WTC11 (cell line): ENCODE measurements at regions of chr12 and their contacts with region 1.

Region 1: DNA sequence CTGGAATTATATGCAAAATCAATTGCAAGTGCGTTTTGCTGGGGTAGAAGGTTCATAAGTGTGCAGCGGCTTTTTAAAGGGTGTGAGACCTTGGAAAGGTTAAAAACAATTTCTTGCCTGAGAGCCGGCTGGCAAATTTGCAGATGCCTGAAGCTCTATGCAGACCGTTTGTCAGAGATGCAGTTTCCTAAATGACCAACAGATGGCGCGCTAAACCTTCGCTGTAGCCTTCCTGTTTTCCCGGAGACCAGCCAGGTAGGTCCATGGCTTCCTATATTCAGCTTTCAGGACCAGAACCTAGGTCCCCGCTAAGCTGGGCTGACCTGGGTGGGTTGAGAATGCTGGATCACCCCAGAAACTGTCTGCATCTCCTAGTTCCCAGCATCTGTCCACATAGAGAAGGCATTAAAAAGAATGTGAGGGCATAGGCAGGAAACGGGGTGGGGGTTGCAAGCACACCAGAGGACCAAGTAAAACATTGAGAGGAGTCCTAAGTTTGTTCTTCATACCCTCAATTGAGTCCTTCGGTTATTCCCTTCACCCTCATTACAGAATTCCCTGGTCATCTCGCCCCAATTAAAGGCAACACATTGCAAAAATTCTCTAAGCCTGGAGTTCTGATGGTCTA is 5.7 kb upstream of the NOS1 start:
- DNase-seq: peak; percentile 91
- ATAC-seq: peak; percentile 86
- H3K4me3 Mint-ChIP-seq: no peak overlapping the region
- H3K27ac Mint-ChIP-seq: no peak overlapping the region
- H3K4me1 Mint-ChIP-seq: peaks cover 10% of the 10 kb centered on the region
- H3K27me3 Mint-ChIP-seq: peaks cover 34% of the 10 kb centered on the region
- CTCF ChIP-seq: peak; percentile 96

Region 2: GRCh38 chr12:117228239-117228638 is 138.9 kb before region 1 on chr12:
- CTCF ChIA-PET with region 1: interaction called, 15 read pairs
- POLR2A ChIA-PET with region 1: no interaction called
- DNase-seq: no peak
- ATAC-seq: no peak
- H3K4me3 Mint-ChIP-seq: no peak overlapping the region
- H3K27ac Mint-ChIP-seq: no peak overlapping the region
- H3K4me1 Mint-ChIP-seq: 0 out of 2 replicates have a peak, but pooled peaks cover 3% of the 10 kb centered on the region
- H3K27me3 Mint-ChIP-seq: no peaks in the 10 kb centered on the region; the same call in 1 of the 2 replicates
- CTCF ChIP-seq: no peak

Region 3: DNA sequence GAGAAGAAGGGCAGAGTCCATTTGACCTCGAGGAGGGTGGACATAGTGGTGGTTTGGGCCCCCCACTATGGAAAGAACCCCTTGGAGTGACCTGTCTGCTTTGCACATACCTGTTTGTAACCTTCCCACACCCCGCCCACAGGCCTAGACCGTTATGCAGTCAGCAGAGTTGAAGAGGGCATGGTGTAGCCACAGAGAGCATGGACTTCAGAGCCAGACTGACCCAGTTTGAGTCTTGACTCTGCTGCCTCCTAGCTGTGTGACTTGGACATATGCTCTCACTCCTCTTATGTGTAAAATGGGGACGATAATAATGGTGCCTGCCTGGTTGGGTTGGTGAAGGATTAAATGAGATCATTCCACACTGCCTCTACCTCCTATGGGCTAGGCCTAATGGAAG is 35.2 kb after region 1 on chr12:
- CTCF ChIA-PET with region 1: interaction called, 24 read pairs
- POLR2A ChIA-PET with region 1: no interaction called
- DNase-seq: peak; percentile 53
- ATAC-seq: peak; percentile 96
- H3K4me3 Mint-ChIP-seq: no peak overlapping the region
- H3K27ac Mint-ChIP-seq: no peak overlapping the region
- H3K4me1 Mint-ChIP-seq: peaks cover 2% of the 10 kb centered on the region
- H3K27me3 Mint-ChIP-seq: no peaks in the 10 kb centered on the region; the same call in 1 of the 2 replicates
- CTCF ChIP-seq: no peak

Region 4: GRCh38 chr12:117494833-117495655 is 127.9 kb after region 1 on chr12:
- CTCF ChIA-PET with region 1: interaction called, 14 read pairs
- POLR2A ChIA-PET with region 1: no interaction called
- DNase-seq: no peak
- ATAC-seq: no peak
- H3K4me3 Mint-ChIP-seq: no peak overlapping the region
- H3K27ac Mint-ChIP-seq: peak overlapping the region; percentile 29; the same call in 1 of the 2 replicates
- H3K4me1 Mint-ChIP-seq: peaks cover 23% of the 10 kb centered on the region
- H3K27me3 Mint-ChIP-seq: no peaks in the 10 kb centered on the region
- CTCF ChIP-seq: no peak

Region 5: DNA sequence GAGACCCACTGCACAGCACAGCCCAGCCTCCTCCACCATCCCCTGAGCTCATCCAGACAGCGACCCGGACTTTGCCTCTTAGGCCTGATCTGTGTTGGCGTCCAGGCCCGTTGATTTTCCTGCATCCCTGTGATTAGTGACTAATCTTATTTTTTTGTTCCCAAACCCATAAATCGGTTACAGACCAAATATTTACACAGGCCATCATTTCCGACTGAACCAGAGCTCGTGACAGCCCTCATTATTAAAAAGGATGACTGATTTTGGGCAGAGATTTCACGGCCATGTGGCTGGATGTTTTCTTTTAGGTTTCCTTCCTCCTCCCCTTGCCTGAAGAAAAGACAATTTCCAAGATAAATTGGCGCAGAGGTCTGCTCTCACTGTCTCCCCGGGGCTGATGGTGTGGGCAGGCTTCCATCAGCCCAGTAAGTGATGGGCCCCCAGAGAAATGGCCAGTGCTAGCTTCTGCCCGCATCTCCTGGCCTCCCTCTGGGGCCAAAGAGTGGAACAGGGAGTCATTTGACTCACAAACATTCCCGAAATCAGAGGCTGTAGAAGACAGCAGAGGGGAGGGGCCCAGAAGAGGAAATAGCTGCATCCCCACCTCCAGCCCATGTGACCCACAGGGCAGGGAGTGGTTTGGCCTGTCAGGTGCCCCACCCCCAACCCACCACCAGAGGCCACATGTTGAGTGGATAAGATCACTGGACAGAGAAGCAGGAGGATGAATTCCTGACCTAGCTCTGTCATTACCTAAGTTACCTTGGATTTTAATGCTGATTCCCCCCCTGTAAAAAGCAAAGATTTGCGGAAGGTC is 318.2 kb after region 1 on chr12:
- CTCF ChIA-PET with region 1: interaction called, 10 read pairs
- POLR2A ChIA-PET with region 1: no interaction called
- DNase-seq: peak; percentile 85
- ATAC-seq: peak; percentile 100
- H3K4me3 Mint-ChIP-seq: peak overlapping the region; percentile 43
- H3K27ac Mint-ChIP-seq: peak overlapping the region; percentile 98
- H3K4me1 Mint-ChIP-seq: peaks cover 20% of the 10 kb centered on the region
- H3K27me3 Mint-ChIP-seq: no peaks in the 10 kb centered on the region
- CTCF ChIP-seq: no peak

Region 6: DNA sequence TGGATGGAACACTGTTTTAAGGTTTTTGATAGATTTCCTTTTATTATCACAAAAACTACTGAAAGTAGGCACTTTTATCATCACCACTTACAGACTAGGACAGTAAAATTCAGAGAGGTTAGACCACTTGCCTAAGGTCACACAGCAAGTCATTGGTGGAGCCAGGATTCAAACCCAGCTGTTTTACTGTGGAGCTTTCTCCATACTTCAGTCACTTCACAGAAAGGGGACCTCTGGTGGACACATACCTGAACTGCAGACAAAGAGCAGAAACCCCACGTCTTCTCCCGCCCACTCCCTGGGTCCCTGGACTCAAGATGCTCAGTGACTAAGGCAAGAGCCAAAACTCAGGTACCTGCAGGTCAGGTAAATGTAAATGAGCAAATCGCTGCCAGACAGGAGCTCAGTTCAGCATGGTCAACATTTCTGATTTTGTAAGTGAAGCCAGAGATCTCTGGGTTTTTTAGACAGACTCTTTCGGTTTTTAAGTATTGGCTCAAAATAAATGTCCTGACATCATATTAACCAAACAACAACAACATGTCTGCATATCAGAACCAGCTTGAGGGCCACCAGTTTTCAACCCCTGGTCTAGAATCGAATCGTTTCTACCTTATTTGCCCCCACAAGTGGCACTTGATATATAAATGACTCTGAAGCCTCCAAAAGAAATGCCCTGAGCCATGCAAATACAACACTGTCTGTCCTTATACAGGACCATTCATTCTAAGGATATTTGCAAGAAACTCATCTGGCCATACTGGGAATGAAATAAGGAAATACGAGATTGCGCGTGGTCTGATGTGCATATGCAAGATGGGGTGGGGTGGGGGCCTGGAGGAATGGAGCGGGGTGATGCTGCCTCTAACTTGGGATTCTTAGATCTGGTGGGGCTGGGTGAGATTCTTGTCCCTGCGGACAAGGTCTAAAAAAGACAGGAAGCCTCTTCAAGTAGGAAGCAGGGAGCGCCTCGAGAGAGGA is 490.8 kb after region 1 on chr12:
- CTCF ChIA-PET with region 1: interaction called, 21 read pairs
- POLR2A ChIA-PET with region 1: no interaction called
- DNase-seq: peak; percentile 83
- ATAC-seq: peak; percentile 64
- H3K4me3 Mint-ChIP-seq: no peak overlapping the region
- H3K27ac Mint-ChIP-seq: no peak overlapping the region
- H3K4me1 Mint-ChIP-seq: 0 out of 2 replicates have a peak, but pooled peaks cover 2% of the 10 kb centered on the region
- H3K27me3 Mint-ChIP-seq: no peaks in the 10 kb centered on the region
- CTCF ChIP-seq: peak; percentile 80